Activated CD4-positive, alpha-beta memory T cell treated with anti-CD3 and anti-CD28 coated beads, Interleukin-2, amount 10 ng/mL, durations not matched to agents 7 days and 5 days (primary cell): ENCODE measurements at regions of chr2 and their contacts with region 1.

Region 1: DNA sequence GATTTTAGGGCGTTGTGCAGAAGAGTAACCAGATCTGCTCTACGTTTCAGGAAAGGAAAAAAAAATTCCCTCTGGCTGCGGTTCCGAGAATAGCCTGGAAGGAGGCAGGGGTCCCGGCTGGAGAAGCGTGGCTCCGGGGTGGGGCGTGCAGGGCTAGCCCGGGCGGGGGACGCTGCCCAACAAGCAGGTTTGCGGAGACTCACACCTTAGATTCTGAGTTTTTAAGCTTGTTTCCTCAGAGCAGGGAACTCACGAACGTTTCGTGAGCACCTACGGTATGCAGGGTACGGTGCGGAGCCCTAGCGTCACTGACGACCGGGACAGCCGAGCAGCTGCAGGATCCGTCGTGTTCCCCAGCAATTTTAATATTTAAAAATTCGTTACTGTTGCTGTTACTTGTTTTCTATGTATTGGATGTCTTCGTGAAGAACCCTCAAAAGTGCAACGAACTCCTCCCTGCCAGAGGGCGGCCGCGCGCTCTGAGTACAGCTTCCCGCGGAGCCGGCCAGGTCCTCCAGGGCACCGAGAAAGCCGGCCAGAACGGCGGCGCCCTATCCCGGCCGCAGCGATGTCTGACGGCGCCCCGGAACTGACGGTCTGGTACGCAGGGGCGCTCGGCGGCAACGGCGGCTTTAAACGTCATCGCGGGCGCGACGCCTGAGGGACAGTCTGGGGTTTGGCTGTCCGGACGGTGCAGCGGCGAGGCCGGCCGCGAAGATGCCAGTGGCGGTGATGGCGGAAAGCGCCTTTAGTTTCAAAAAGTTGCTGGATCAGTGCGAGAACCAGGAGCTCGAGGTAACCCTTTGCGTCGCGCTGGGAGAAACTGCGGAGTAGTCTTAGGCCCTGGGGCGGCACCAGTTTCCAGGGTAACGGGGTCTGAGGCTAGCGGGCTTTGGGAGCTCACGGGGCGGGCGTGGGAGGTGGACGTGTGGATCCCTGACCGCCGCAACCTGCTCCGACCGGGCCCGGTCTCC is at the start of gene COPS8:
- DNase-seq: peak; percentile 93
- H3K4me3 Mint-ChIP-seq: peak within 1 kb of the TSS; percentile 99
- H3K27ac Mint-ChIP-seq: peak within 1 kb of the TSS; percentile 95
- H3K4me1 Mint-ChIP-seq: peaks cover 23% of the 10 kb centered on the region
- H3K27me3 Mint-ChIP-seq: no peaks in the 10 kb centered on the region
- total RNA-seq, gene COPS8: 42.6 to 44.0 TPM

Region 2: GRCh38 chr2:236748801-236749200 is 336.7 kb before region 1 on chr2:
- CTCF ChIA-PET with region 1: no interaction called
- POLR2A ChIA-PET with region 1: no interaction called
- DNase-seq: no peak
- H3K4me3 Mint-ChIP-seq: no peak overlapping the region
- H3K27ac Mint-ChIP-seq: no peak overlapping the region
- H3K4me1 Mint-ChIP-seq: no peaks in the 10 kb centered on the region
- H3K27me3 Mint-ChIP-seq: peaks cover 6% of the 10 kb centered on the region

Region 3: DNA sequence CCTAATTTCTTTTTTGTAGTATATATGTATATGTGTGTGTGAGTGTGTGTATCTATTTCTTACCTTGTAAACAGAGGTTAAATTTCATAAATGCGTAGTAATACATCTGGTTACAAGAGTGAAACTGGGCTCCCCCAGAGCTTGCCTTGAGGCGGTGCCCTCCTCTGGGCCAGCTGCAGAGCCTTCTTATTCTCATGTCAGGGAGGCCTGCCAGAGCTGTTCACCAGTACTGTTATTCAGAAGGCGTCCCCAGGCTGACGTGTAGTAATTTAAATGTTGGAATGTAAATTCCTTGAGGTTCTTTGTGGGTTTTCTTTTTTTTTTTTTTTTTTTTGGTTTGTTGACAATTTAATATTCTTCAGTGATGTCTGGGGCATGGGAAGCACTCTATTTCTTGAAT is 11.4 kb after region 1 on chr2:
- CTCF ChIA-PET with region 1: interaction called, 4 read pairs
- POLR2A ChIA-PET with region 1: interaction called, 21 read pairs
- DNase-seq: no peak
- H3K4me3 Mint-ChIP-seq: no peak overlapping the region
- H3K27ac Mint-ChIP-seq: no peak overlapping the region
- H3K4me1 Mint-ChIP-seq: no peaks in the 10 kb centered on the region
- H3K27me3 Mint-ChIP-seq: no peaks in the 10 kb centered on the region